Adrenal gland (tissue), 19 donors: ENCODE measurements at regions of chr5 and their contacts with region 1.

Region 1: DNA sequence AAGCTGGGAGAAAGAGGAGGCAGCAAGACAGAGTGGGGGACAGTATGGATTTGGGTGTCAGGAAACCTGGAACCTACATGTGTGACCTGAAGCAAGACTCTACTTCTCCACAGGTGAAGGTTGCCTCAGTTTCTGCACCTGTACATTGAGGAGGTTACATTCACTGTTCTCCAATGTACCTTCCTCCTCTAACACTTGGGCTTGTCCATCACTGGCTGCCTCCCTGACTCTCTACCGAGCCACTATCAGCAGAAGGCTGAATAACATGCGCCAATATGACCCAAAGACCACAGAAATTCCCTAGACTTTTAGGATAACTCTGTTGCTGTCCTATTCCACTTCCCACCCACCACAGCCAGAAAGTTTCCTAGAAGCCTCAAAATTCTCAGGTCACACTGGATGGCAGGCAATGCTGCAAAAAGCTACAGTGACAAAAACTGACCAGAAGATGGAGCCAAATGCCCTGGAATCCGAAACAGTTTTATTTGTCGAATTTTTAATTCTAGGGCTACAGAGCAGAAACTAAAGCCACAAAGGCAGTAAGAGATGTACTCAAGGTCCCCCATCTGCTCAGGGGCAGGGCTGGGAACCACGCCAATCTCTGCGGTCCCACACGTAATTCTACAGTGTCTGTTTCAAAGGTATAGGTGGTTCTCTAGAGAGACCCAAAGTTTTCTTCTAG is 64.4 kb downstream of the FAM114A2 start:
- DNase-seq: peak in 6 of 7 donors; percentile 20 to 45 (median 32)
- H3K4me3 ChIP-seq: no peak overlapping the region
- H3K27ac ChIP-seq: no peak overlapping the region
- H3K4me1 ChIP-seq: no peaks in the 10 kb centered on the region
- H3K27me3 ChIP-seq: peaks cover 6% of the 10 kb centered on the region
- CTCF ChIP-seq: peak; percentile 43 to 78 (median 70)
- POLR2A ChIP-seq: no peak

Region 2: GRCh38 chr5:153299891-153300290 is 674.4 kb before region 1 on chr5:
- intact Hi-C with region 1: no loop called
- DNase-seq: no peak
- H3K4me3 ChIP-seq: no peak overlapping the region
- H3K27ac ChIP-seq: no peak overlapping the region
- H3K4me1 ChIP-seq: no peaks in the 10 kb centered on the region
- H3K27me3 ChIP-seq: no peaks in the 10 kb centered on the region
- CTCF ChIP-seq: no peak
- POLR2A ChIP-seq: no peak

Region 3: DNA sequence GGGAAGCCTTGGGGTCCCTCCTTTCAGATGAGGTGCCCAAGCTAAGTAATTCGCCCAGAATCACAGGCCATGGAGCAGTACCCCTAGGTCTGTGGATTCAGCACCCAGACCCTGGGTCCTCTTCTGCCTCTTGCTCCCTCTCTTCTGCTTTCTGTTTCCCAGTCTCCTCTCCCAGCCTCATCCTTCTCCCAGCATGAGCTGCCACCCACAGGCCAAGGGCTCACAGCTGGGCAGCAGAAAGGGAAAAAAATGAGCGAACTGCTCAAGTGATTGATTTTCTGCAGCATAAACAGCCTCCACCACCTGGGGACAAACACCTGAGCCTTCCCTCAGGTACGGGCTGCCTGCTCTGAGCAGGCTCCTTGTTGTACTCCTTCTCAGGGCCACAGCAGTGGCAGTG is 357.7 kb after region 1 on chr5:
- intact Hi-C with region 1: no loop called
- DNase-seq: no peak
- H3K4me3 ChIP-seq: no peak overlapping the region
- H3K27ac ChIP-seq: no peak overlapping the region
- H3K4me1 ChIP-seq: no peaks in the 10 kb centered on the region
- H3K27me3 ChIP-seq: no peaks in the 10 kb centered on the region
- CTCF ChIP-seq: no peak
- POLR2A ChIP-seq: no peak

Region 4: GRCh38 chr5:154418344-154418820 is 444.1 kb after region 1 on chr5:
- intact Hi-C with region 1: loop called in 1 of 2 experiments (anchors 10 kb)
- DNase-seq: peak in 6 of 7 donors; percentile 31 to 73 (median 42)
- H3K4me3 ChIP-seq: no peak overlapping the region
- H3K27ac ChIP-seq: no peak overlapping the region
- H3K4me1 ChIP-seq: peaks cover 0 to 6% of the 10 kb centered on the region in 2 donors
- H3K27me3 ChIP-seq: no peaks in the 10 kb centered on the region
- CTCF ChIP-seq: no peak
- POLR2A ChIP-seq: no peak

Region 5: GRCh38 chr5:154630410-154630809 is 656.1 kb after region 1 on chr5:
- intact Hi-C with region 1: loop called in 1 of 2 experiments (anchors 10 kb)
- DNase-seq: peak in 1 of 7 donors; percentile 28
- H3K4me3 ChIP-seq: no peak overlapping the region
- H3K27ac ChIP-seq: no peak overlapping the region
- H3K4me1 ChIP-seq: no peaks in the 10 kb centered on the region
- H3K27me3 ChIP-seq: no peaks in the 10 kb centered on the region
- CTCF ChIP-seq: no peak
- POLR2A ChIP-seq: no peak